Activated CD4-positive, alpha-beta T cell treated with anti-CD3 and anti-CD28 coated beads, Interleukin-2, amount 10 ng/mL, durations not matched to agents 7 days and 5 days (primary cell): ENCODE measurements at regions of chr9 and their contacts with region 1.

Region 1: GRCh38 chr9:113657703-113658544 is 194.4 kb downstream of the RGS3 start:
- DNase-seq: peak; percentile 79
- H3K4me3 Mint-ChIP-seq: no peak overlapping the region
- H3K27ac Mint-ChIP-seq: no peak overlapping the region
- H3K4me1 Mint-ChIP-seq: peaks cover 9% of the 10 kb centered on the region
- H3K27me3 Mint-ChIP-seq: peaks cover 25% of the 10 kb centered on the region

Region 2: DNA sequence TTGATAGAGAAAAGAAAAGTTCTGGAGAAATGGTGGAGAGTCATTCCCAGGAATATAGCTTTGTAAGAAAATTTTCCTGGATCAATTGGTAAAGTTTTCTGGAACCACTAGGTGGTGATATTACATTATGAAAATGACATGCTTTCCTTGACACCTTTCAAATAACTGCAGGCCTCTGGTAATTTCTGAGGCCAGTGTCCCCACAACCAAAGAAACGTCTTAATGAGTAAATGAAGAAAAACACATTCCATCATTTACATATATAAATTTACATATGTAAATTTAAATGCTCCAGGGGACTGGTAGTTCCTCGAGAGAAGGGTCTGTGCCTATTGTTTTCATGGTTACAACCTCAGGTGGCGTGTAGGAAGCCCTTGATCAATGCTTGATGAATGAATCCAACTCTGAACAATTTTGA is 211.6 kb before region 1 on chr9:
- CTCF ChIA-PET with region 1: interaction called, 14 read pairs
- POLR2A ChIA-PET with region 1: no interaction called
- DNase-seq: no peak
- H3K4me3 Mint-ChIP-seq: no peak overlapping the region
- H3K27ac Mint-ChIP-seq: no peak overlapping the region
- H3K4me1 Mint-ChIP-seq: no peaks in the 10 kb centered on the region
- H3K27me3 Mint-ChIP-seq: no peaks in the 10 kb centered on the region

Region 3: DNA sequence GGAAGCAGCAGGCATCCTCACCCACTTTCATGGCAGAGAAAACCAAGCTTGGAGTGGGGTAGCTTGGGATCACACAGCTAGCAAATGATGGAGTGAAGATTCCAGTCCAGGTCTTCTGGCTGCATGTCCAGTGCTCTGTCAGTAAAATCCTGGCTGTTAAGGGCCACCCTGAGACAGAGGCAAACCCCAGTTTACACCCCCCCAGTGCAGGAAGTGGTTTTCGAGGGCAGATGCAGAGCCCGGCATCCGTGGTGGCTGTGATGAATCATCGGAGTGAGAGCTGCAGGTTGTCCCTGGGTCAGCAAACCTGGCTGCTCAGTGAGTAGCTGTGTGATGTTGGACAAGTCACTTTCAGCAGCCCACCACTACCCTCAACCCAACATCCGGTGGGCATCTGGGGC is 79.0 kb before region 1 on chr9:
- CTCF ChIA-PET with region 1: interaction called, 123 read pairs
- POLR2A ChIA-PET with region 1: no interaction called
- DNase-seq: peak; percentile 91
- H3K4me3 Mint-ChIP-seq: peak overlapping the region; percentile 85
- H3K27ac Mint-ChIP-seq: peak overlapping the region; percentile 97
- H3K4me1 Mint-ChIP-seq: peaks cover 80% of the 10 kb centered on the region
- H3K27me3 Mint-ChIP-seq: no peaks in the 10 kb centered on the region

Region 4: DNA sequence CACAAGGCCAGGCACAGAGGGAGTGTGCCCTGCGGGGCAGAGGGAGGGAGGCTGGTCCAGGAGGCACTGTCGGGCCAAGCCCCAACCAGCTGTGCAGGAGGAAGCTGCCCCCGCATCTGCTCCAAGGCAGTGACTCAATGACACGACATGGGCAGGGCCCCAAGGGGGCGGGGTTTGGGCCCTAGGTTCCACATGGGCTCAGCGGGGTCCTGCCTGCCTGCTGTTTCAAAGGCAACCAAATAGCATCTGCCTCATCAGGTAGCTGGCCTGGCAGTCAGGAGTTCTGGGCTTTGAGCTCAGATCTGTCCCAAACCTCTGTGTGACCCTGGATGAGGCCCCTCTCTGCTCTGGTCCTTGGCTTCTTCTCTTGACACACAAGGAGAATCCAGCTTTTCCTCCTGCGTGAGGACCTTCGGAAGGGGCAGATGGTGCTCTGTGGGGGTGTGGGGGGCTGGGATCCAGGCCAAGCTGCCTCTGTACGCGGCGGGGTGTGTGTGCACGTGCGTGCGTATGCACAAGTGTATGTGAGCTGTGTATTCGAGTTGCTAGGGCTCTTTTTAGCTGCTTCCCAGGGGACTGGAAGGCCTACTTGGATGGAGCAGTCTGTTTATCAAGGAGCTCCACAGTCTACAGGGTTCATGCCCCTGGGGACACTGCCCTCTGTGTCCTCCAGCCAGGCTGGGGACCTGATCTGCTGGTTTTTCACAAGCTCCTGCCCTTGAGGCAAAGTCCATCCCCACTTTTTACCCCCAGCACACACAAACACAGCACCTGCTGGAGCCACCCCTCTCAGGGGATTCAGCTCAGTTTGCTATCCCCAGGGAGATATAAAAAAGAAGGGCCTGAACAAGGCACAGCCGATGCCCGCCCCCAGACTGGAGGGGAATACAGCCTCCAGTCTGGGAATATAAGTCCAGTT is 55.5 kb before region 1 on chr9:
- CTCF ChIA-PET with region 1: interaction called, 10 read pairs
- POLR2A ChIA-PET with region 1: no interaction called
- DNase-seq: no peak
- H3K4me3 Mint-ChIP-seq: no peak overlapping the region
- H3K27ac Mint-ChIP-seq: no peak overlapping the region
- H3K4me1 Mint-ChIP-seq: peaks cover 3% of the 10 kb centered on the region
- H3K27me3 Mint-ChIP-seq: no peaks in the 10 kb centered on the region

Region 5: GRCh38 chr9:113668061-113668460 is 10.1 kb after region 1 on chr9:
- CTCF ChIA-PET with region 1: interaction called, 11 read pairs
- POLR2A ChIA-PET with region 1: no interaction called
- DNase-seq: no peak
- H3K4me3 Mint-ChIP-seq: no peak overlapping the region
- H3K27ac Mint-ChIP-seq: no peak overlapping the region
- H3K4me1 Mint-ChIP-seq: peaks cover 5% of the 10 kb centered on the region
- H3K27me3 Mint-ChIP-seq: no peaks in the 10 kb centered on the region